ENCODE measurements at regions of chr11 and their contacts with region 1.

Region 1: GRCh38 chr11:14907411-14908213 is 15.6 kb upstream of the CYP2R1 start:
- DNase-seq: peak; percentile 90
- ATAC-seq: peak; percentile 86 to 89
- H3K4me3 ChIP-seq: no peak overlapping the region
- H3K27ac ChIP-seq: no peak overlapping the region
- H3K4me1 ChIP-seq: peaks cover 11% of the 10 kb centered on the region
- H3K27me3 ChIP-seq: no peaks in the 10 kb centered on the region
- CTCF ChIP-seq: peak; percentile 90

Region 2: DNA sequence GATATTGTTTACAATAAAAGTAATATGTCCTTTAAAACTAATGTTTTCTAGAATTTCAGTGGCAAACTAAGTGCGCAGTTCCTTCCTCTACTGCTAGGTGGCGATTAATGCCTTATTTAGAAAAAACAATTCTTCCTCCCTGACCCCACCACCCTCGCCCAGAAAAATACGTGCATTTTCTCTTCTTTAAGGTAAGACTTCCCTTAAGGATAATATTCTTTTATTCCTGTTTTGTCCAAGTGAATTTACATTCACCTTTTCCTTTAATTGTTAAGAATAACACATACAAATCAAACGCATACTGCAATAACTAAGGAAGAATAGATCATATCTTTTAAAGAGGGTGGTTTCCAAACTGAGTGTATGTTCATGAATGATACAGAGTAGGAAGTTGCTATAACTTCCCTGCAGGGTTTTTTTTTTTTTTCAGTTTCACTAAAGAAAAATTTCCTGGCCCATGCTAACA is 370.4 kb before region 1 on chr11:
- intact Hi-C with region 1: loop called (anchors 10 kb)
- DNase-seq: no peak
- ATAC-seq: peak; percentile 47 to 56
- H3K4me3 ChIP-seq: peak overlapping the region; percentile 10
- H3K27ac ChIP-seq: peak overlapping the region; percentile 49
- H3K4me1 ChIP-seq: peaks cover 41% of the 10 kb centered on the region
- H3K27me3 ChIP-seq: no peaks in the 10 kb centered on the region
- CTCF ChIP-seq: peak; percentile 81

Region 3: GRCh38 chr11:14789879-14790484 is 117.6 kb before region 1 on chr11:
- intact Hi-C with region 1: loop called (anchors 10 kb)
- DNase-seq: no peak
- ATAC-seq: no peak
- H3K4me3 ChIP-seq: no peak overlapping the region
- H3K27ac ChIP-seq: no peak overlapping the region
- H3K4me1 ChIP-seq: no peaks in the 10 kb centered on the region
- H3K27me3 ChIP-seq: no peaks in the 10 kb centered on the region
- CTCF ChIP-seq: peak; percentile 38

Measured in lower lobe of right lung (tissue), 2 donors.